Esophagus muscularis mucosa (tissue), 4 donors: ENCODE measurements at regions of chr4 and their contacts with region 1.

Region 1: GRCh38 chr4:118974758-118975157 is 86.1 kb downstream of the SYNPO2 start:
- DNase-seq: peak; percentile 19
- H3K4me3 ChIP-seq: no peak overlapping the region
- H3K27ac ChIP-seq: peak overlapping the region; percentile 79 to 88 (median 84)
- H3K4me1 ChIP-seq: peaks cover 42 to 96% (median 91%) of the 10 kb centered on the region in 4 donors
- H3K27me3 ChIP-seq: no peaks in the 10 kb centered on the region
- CTCF ChIP-seq: no peak
- EP300 ChIP-seq: no peak
- POLR2A ChIP-seq: no peak

Region 2: DNA sequence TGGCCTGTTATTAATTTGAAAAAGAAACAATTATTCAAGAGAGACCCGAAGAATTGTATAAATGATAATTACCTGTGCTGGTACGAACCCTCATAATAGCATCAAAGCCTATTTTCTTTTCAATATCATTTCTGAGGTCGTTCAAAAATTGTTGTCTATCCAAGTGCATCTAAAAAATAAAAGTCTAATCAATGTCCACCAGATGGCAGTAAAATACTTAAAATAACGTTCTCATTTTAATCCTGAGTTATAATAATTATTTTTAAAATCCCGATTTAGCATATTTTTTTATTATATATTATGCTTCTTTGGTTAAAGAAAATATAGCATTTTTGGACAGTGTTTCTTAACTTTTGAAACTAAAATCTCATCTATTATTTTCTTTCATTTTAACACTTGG is 233.9 kb before region 1 on chr4:
- intact Hi-C with region 1: loop called (anchors 5 kb)
- DNase-seq: no peak
- H3K4me3 ChIP-seq: peak overlapping the region in 3 of 4 donors; percentile 29 to 35 (median 32)
- H3K27ac ChIP-seq: peak overlapping the region; percentile 64 to 87 (median 80)
- H3K4me1 ChIP-seq: peaks cover 8 to 74% (median 64%) of the 10 kb centered on the region in 4 donors
- H3K27me3 ChIP-seq: no peaks in the 10 kb centered on the region
- CTCF ChIP-seq: peak; percentile 55 to 61 (median 59)
- EP300 ChIP-seq: no peak
- POLR2A ChIP-seq: no peak

Region 3: GRCh38 chr4:118883861-118884260 is 90.9 kb before region 1 on chr4:
- intact Hi-C with region 1: no loop called
- DNase-seq: no peak
- H3K4me3 ChIP-seq: no peak overlapping the region
- H3K27ac ChIP-seq: no peak overlapping the region
- H3K4me1 ChIP-seq: peaks cover 0 to 4% (median 1%) of the 10 kb centered on the region in 4 donors
- H3K27me3 ChIP-seq: no peaks in the 10 kb centered on the region
- CTCF ChIP-seq: peak in 1 of 3 experiments; percentile 20
- EP300 ChIP-seq: no peak
- POLR2A ChIP-seq: no peak

Region 4: DNA sequence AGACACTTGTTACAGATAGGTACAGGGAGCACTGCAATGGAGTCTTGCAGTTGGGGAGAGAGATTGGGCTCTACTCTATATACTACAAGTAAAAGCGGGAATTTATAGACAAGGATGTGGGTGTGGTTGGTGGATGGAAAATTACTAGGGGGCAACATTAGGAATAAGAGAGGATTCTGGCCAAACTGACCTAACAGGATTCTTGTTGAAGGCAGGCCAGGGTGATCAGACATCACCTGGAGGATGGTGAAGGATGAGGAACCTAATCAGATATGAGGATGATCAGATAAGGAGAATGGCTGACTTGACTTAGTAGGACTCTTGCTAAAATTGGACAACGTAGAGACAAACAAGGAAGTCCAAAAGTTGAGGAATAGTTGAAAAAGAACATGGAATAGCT is 246.0 kb after region 1 on chr4:
- intact Hi-C with region 1: no loop called
- DNase-seq: no peak
- H3K4me3 ChIP-seq: no peak overlapping the region
- H3K27ac ChIP-seq: no peak overlapping the region
- H3K4me1 ChIP-seq: peaks cover 4 to 41% (median 27%) of the 10 kb centered on the region in 4 donors
- H3K27me3 ChIP-seq: no peaks in the 10 kb centered on the region
- CTCF ChIP-seq: no peak
- EP300 ChIP-seq: no peak
- POLR2A ChIP-seq: no peak